Natural killer cell (primary cell): ENCODE measurements at regions of chr12 and their contacts with region 1.

Region 1: GRCh38 chr12:94434171-94434570 is 25.5 kb downstream of the CEP83 start:
- DNase-seq: peak in 1 of 2 donors; percentile 4
- ATAC-seq: no peak
- H3K4me3 ChIP-seq: no peak overlapping the region
- H3K4me3 Mint-ChIP-seq: no peak overlapping the region
- H3K27ac ChIP-seq: no peak overlapping the region
- H3K27ac Mint-ChIP-seq: no peak overlapping the region
- H3K4me1 ChIP-seq: peaks cover 6% of the 10 kb centered on the region
- H3K4me1 Mint-ChIP-seq: peaks cover 9 to 11% of the 10 kb centered on the region in 2 donors
- H3K27me3 ChIP-seq: no peaks in the 10 kb centered on the region
- H3K27me3 Mint-ChIP-seq: no peaks in the 10 kb centered on the region
- CTCF ChIP-seq: no peak

Region 2: GRCh38 chr12:94532490-94533422 is 98.6 kb after region 1 on chr12:
- intact Hi-C with region 1: loop called (anchors 5 kb)
- DNase-seq: peak; percentile 63 to 81
- ATAC-seq: peak; percentile 74 to 88 (median 77)
- H3K4me3 ChIP-seq: no peak overlapping the region
- H3K4me3 Mint-ChIP-seq: no peak overlapping the region
- H3K27ac ChIP-seq: no peak overlapping the region
- H3K27ac Mint-ChIP-seq: no peak overlapping the region
- H3K4me1 ChIP-seq: no peaks in the 10 kb centered on the region
- H3K4me1 Mint-ChIP-seq: peaks cover 8% of the 10 kb centered on the region in 2 donors
- H3K27me3 ChIP-seq: no peaks in the 10 kb centered on the region
- H3K27me3 Mint-ChIP-seq: peaks cover 6 to 8% of the 10 kb centered on the region in 2 donors
- CTCF ChIP-seq: peak; percentile 65